ENCODE measurements at regions of chr4 and their contacts with region 1.

Region 1: GRCh38 chr4:127965062-127965802 is at the starts of genes ABHD18 and MFSD8:
- DNase-seq: peak; percentile 99
- ATAC-seq: peak; percentile 97
- H3K4me3 Mint-ChIP-seq: peak within 1 kb of the TSS; percentile 97
- H3K27ac Mint-ChIP-seq: peak within 1 kb of the TSS; percentile 99
- H3K4me1 Mint-ChIP-seq: peaks cover 36% of the 10 kb centered on the region
- H3K27me3 Mint-ChIP-seq: no peaks in the 10 kb centered on the region
- total RNA-seq, gene ABHD18: 26.4 to 26.5 TPM
- total RNA-seq, gene MFSD8: 14.0 to 17.7 TPM

Region 2: DNA sequence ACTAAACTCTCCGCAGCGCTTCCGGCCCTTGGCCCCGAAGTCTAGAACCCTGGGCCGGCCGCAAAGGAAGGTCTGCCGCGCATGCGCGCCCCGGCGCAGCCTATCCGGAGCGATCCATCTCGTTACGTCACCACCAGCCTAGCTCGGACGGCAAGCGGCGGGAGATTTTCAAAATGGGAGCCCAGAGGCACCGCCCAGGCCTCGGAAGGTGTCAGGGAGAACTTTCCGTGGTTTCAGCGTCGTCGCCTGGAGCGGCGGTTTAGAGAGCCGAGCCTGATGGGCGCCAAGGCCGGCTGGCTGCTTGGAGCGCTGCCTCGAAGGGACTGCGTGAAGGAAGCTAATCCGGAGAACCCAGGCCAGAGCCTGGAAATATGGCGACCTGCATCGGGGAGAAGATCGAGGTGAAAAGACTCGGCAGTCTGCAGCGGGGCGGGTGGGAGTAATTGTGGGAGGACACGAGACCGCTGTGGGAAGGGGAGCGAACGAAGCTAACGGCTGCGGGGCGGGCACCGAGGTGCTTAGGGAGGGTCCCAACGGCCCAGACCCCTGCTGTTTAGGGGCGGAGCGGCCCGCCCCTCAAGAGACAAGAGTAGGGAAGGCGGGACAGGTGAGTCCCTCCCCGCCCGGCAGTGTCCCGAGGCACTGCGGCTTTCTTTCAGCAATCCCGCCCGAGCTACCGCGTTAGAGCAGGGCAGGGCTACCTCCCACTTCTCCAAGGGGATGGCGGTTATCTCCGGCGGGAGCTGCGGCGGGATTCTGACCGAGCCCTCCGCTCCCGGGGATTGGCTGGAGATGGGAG is 84.3 kb before region 1 on chr4 and contains the start of gene PLK4:
- CTCF ChIA-PET with region 1: interaction called, 14 read pairs
- POLR2A ChIA-PET with region 1: interaction called, 38 read pairs
- DNase-seq: peak; percentile 97
- ATAC-seq: peak; percentile 92
- H3K4me3 Mint-ChIP-seq: peak within 1 kb of the TSS; percentile 90
- H3K27ac Mint-ChIP-seq: peak within 1 kb of the TSS; percentile 95
- H3K4me1 Mint-ChIP-seq: peaks cover 31% of the 10 kb centered on the region
- H3K27me3 Mint-ChIP-seq: no peaks in the 10 kb centered on the region
- total RNA-seq, gene PLK4: 62.1 to 65.9 TPM

Region 3: DNA sequence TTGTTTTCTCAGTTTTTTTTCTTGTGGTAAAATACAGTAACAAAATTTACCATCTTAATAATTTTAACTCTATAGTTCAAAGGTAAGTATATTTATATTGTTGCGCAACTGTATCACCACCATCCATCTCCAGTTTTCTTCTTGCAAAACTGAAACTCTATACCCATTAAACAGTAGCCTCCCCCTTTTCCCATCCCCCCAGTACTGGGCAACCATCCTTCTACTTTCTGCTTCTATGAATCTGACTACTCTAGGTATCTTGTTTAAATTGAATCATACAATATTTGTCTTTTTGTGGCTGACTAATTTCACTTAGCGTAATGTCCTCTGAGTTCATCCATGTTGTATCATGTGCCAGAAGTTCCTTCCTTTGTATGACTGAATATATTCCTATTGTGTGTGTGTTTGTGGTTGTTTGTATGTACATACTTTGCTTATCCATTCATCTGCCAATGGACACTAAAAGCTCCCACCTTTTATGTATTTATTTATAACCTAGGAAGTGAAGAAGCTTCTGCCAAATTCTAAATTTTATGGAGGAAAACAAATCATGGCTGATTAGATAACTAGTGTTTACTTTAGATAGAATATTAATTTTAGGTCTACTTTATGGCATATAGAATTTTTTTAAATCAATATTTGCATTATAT is 10.0 kb after region 1 on chr4:
- CTCF ChIA-PET with region 1: interaction called, 3 read pairs
- POLR2A ChIA-PET with region 1: interaction called, 10 read pairs
- DNase-seq: no peak
- ATAC-seq: no peak
- H3K4me3 Mint-ChIP-seq: no peak overlapping the region
- H3K27ac Mint-ChIP-seq: no peak overlapping the region
- H3K4me1 Mint-ChIP-seq: peaks cover 6% of the 10 kb centered on the region
- H3K27me3 Mint-ChIP-seq: no peaks in the 10 kb centered on the region

Region 4: GRCh38 chr4:128025319-128025718 is 60.1 kb after region 1 on chr4:
- CTCF ChIA-PET with region 1: no interaction called
- POLR2A ChIA-PET with region 1: no interaction called
- DNase-seq: no peak
- ATAC-seq: no peak
- H3K4me3 Mint-ChIP-seq: no peak overlapping the region
- H3K27ac Mint-ChIP-seq: no peak overlapping the region
- H3K4me1 Mint-ChIP-seq: no peaks in the 10 kb centered on the region
- H3K27me3 Mint-ChIP-seq: no peaks in the 10 kb centered on the region

Region 5: GRCh38 chr4:128060699-128061565 is 95.7 kb after region 1 on chr4 and contains the start of gene LARP1B:
- CTCF ChIA-PET with region 1: interaction called, 3 read pairs
- POLR2A ChIA-PET with region 1: interaction called, 25 read pairs
- DNase-seq: peak; percentile 95
- ATAC-seq: peak; percentile 92
- H3K4me3 Mint-ChIP-seq: peak within 1 kb of the TSS; percentile 82
- H3K27ac Mint-ChIP-seq: peak within 1 kb of the TSS; percentile 89
- H3K4me1 Mint-ChIP-seq: peaks cover 21% of the 10 kb centered on the region
- H3K27me3 Mint-ChIP-seq: peaks cover 3% of the 10 kb centered on the region
- total RNA-seq, gene LARP1B: 13.6 to 14.5 TPM